ENCODE measurements at regions of chrX and their contacts with region 1.

Region 1: DNA sequence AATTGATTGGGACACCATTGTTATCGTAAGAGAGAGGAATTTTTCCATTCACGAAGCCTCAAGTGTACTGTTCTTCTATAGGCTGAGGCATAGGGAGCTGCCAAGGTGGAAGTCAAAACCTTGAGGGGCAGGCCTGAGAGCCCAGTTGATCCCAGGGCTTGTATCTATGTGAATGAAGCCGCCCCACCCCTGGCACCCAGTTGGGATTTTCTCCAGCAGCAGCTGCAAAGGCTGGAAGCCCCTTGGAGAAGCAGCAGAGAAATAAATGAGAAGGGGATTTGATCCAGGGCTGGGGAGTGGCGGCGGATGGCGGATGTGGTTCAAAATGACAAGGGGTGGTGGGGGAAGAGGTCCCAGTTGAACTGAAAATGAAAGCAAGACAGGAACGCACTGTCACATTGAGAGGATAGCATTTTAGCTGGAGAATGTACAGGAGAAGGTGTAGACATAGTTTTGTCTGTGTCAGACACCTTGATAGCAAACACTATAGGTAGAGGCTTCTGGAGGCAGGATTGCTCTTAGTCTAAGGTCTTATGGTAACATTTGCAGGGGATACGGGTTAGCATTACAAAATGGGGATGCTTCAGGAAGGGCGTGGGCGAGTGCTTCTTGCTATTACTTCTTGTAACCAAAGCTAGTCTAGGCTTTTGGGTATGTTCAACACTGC is 32.6 kb downstream of the DOCK11 start:
- DNase-seq: no peak
- ATAC-seq: no peak
- H3K4me3 ChIP-seq: no peak overlapping the region
- H3K27ac ChIP-seq: no peak overlapping the region
- H3K4me1 ChIP-seq: no peaks in the 10 kb centered on the region
- H3K27me3 ChIP-seq: peaks cover 3% of the 10 kb centered on the region; the same call in 1 of the 2 replicates
- CTCF ChIP-seq: no peak

Region 2: GRCh38 chrX:118000518-118000917 is 527.7 kb before region 1 on chrX:
- CTCF ChIA-PET with region 1: no interaction called
- POLR2A ChIA-PET with region 1: no interaction called
- in situ Hi-C with region 1: no loop called
- intact Hi-C with region 1: no loop called
- DNase-seq: no peak
- ATAC-seq: no peak
- H3K4me3 ChIP-seq: no peak overlapping the region
- H3K27ac ChIP-seq: no peak overlapping the region
- H3K4me1 ChIP-seq: no peaks in the 10 kb centered on the region
- H3K27me3 ChIP-seq: no peaks in the 10 kb centered on the region
- CTCF ChIP-seq: no peak

Region 3: GRCh38 chrX:118126286-118126685 is 401.9 kb before region 1 on chrX:
- CTCF ChIA-PET with region 1: no interaction called
- POLR2A ChIA-PET with region 1: no interaction called
- in situ Hi-C with region 1: no loop called
- intact Hi-C with region 1: no loop called
- DNase-seq: no peak
- ATAC-seq: no peak
- H3K4me3 ChIP-seq: no peak overlapping the region
- H3K27ac ChIP-seq: no peak overlapping the region
- H3K4me1 ChIP-seq: no peaks in the 10 kb centered on the region
- H3K27me3 ChIP-seq: no peaks in the 10 kb centered on the region
- CTCF ChIP-seq: no peak

Region 4: GRCh38 chrX:118464501-118464900 is 63.7 kb before region 1 on chrX:
- CTCF ChIA-PET with region 1: interaction called, 10 read pairs
- POLR2A ChIA-PET with region 1: no interaction called
- in situ Hi-C with region 1: no loop called
- intact Hi-C with region 1: no loop called
- DNase-seq: no peak
- ATAC-seq: no peak
- H3K4me3 ChIP-seq: no peak overlapping the region
- H3K27ac ChIP-seq: no peak overlapping the region
- H3K4me1 ChIP-seq: no peaks in the 10 kb centered on the region
- H3K27me3 ChIP-seq: no peaks in the 10 kb centered on the region
- CTCF ChIP-seq: no peak

Region 5: DNA sequence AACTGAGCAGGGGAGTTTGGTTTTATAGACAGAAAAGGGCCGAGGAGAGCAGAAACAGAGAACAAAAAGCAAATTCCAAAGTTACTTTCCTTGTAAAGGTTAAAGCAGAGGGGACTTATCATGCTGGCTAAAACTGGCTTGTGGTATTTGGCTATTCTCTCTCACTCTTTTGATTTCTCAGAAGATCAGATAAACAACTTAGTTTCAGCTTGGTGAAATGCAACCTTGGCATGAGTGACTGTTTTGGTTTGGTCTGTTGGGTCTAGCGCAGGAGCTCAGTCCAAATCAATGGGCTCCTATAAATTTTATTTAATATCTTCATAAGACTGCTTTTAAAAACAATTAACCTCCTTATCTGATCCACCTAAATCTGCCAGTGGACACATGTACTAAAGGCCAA is 646.7 kb after region 1 on chrX:
- CTCF ChIA-PET with region 1: no interaction called
- POLR2A ChIA-PET with region 1: interaction called, 11 read pairs
- in situ Hi-C with region 1: no loop called
- intact Hi-C with region 1: no loop called
- DNase-seq: no peak
- ATAC-seq: no peak
- H3K4me3 ChIP-seq: no peak overlapping the region
- H3K27ac ChIP-seq: no peak overlapping the region
- H3K4me1 ChIP-seq: no peaks in the 10 kb centered on the region
- H3K27me3 ChIP-seq: no peaks in the 10 kb centered on the region
- CTCF ChIP-seq: no peak